Cardiac septum (tissue), 1 donor: ENCODE measurements at regions of chr5 and their contacts with region 1.

Region 1: DNA sequence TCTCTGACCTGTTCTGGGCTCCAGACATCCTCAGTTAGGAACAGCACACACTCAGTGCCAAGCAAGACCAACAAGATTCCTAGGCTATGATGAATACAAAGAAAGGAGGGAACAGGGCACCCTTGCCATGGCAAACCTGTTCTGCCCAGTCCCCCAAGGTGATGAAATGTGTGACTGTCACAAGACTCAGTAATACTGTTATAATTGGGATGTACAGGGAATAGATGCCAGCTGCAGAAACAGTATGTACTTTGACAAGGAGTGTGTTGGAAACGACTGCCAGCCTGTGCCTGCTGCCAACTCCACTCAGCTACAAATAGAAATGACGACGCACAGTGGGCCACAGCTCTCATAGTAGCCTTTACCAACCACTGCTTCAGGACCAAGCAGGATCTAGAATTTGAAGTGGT is 453.0 kb downstream of the EFNA5 start:
- DNase-seq: peak; percentile 87

Region 2: DNA sequence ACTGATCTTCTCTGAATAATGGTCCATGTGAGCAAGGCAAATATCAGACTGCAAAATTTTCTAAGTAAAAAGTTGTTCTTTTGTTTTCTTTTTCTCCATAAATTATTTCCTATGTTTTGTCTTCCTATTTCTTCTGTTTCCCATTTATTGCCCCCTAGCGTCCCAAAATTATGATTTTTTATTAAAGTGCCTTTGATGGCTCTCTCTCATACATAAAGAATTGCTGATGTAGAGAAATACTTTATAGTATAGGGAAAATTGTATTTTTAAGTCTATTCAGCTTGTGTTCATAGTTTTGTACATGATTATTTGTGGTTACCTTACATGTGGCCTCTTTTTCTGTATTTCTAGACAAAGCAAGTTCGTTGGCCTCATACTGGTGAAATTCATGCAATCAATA is 578.2 kb before region 1 on chr5:
- intact Hi-C with region 1: no loop called
- DNase-seq: no peak

Region 3: GRCh38 chr5:107058239-107058638 is 159.5 kb before region 1 on chr5:
- intact Hi-C with region 1: loop called (anchors 5 kb)
- DNase-seq: no peak

Region 4: DNA sequence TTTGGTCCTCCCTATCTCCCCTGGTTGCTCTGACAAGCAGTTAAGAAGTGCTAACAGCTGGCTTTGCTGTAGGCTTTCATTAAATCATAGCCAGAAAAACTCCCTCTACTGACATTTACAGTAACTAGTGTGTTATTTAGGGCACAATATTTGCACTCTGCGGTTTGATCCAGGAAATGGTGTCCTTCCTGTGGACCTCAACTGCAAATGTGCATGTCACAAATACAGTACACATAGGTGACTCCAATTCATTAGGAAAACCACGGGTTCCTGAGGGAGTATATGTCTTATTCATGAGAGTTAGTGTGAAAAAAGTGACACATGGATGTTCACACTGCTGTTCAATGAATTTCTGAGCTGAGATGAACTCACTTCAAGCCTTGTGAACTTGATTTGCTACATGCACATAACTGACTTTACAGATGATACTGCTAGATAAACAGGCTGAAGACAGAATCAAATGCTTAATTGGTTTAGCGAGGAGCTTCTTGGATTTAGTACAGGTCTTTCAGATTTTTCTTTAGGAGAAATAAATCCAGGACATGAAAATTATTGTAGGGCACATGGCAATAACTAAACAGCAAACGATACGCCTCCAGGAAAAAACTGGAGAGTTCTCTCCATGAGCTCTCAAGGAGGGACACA is 171.5 kb after region 1 on chr5:
- intact Hi-C with region 1: loop called (anchors 2 kb)
- DNase-seq: no peak